Endothelial cell of umbilical vein (primary cell): ENCODE measurements at regions of chr18 and their contacts with region 1.

Region 1: DNA sequence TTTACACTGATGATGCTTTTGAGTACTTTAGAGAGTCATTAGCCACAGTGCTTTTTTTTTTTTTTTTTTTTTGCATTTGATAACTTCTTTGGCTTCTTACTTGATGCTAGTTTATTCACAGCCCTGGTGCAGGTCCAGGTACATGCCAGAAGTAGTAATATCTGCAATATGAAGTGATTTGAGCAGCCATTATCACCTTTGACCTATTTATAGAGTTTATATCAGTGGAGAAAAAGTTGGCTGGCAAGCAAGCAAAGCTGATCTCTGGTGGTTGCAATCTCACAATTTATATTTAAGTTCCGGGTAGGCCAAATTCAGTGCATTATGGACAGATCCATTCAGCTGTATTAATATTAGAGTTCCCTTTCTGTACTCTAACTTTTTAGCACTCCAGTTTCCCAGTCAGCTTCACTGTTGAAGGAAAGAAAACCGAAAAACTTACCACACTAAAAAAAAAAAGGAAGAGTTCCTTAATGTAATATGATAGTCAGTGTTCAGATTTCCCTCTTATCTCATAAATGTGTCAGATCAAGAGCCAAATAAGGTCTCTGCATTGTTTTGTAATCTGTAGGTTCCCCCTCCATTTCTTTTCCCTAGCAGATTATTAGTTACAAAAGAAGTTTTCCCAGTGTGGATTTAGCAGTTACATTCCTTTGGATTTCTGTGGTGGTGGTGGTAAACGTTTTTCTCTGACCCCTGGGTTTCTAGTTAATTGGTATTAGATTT is 78.6 kb downstream of the HAUS1 start:
- DNase-seq: no peak
- H3K4me3 ChIP-seq: no peak overlapping the region
- H3K27ac ChIP-seq: no peak overlapping the region
- H3K4me1 ChIP-seq: no peaks in the 10 kb centered on the region
- H3K27me3 ChIP-seq: no peaks in the 10 kb centered on the region
- CTCF ChIP-seq: no peak
- POLR2A ChIP-seq: no peak

Region 2: GRCh38 chr18:45863469-45863868 is 319.3 kb before region 1 on chr18:
- CTCF ChIA-PET with region 1: no interaction called
- POLR2A ChIA-PET with region 1: no interaction called
- dilution Hi-C with region 1: no loop called
- intact Hi-C with region 1: no loop called
- DNase-seq: no peak
- H3K4me3 ChIP-seq: no peak overlapping the region
- H3K27ac ChIP-seq: no peak overlapping the region
- H3K4me1 ChIP-seq: no peaks in the 10 kb centered on the region
- H3K27me3 ChIP-seq: no peaks in the 10 kb centered on the region
- CTCF ChIP-seq: no peak
- POLR2A ChIP-seq: no peak

Region 3: GRCh38 chr18:46213295-46213694 is 30.5 kb after region 1 on chr18:
- CTCF ChIA-PET with region 1: interaction called, 17 read pairs
- POLR2A ChIA-PET with region 1: no interaction called
- dilution Hi-C with region 1: no loop called
- intact Hi-C with region 1: no loop called
- DNase-seq: peak; percentile 32
- H3K4me3 ChIP-seq: no peak overlapping the region
- H3K27ac ChIP-seq: no peak overlapping the region
- H3K4me1 ChIP-seq: peaks cover 12% of the 10 kb centered on the region
- H3K27me3 ChIP-seq: no peaks in the 10 kb centered on the region
- CTCF ChIP-seq: peak in 1 of 2 donors; percentile 32
- POLR2A ChIP-seq: no peak

Region 4: GRCh38 chr18:46518438-46518837 is 335.6 kb after region 1 on chr18:
- CTCF ChIA-PET with region 1: no interaction called
- POLR2A ChIA-PET with region 1: no interaction called
- dilution Hi-C with region 1: no loop called
- intact Hi-C with region 1: no loop called
- DNase-seq: no peak
- H3K4me3 ChIP-seq: no peak overlapping the region
- H3K27ac ChIP-seq: no peak overlapping the region
- H3K4me1 ChIP-seq: no peaks in the 10 kb centered on the region
- H3K27me3 ChIP-seq: no peaks in the 10 kb centered on the region
- CTCF ChIP-seq: no peak
- POLR2A ChIP-seq: no peak